ENCODE measurements at regions of chr17 and their contacts with region 1.

Region 1: DNA sequence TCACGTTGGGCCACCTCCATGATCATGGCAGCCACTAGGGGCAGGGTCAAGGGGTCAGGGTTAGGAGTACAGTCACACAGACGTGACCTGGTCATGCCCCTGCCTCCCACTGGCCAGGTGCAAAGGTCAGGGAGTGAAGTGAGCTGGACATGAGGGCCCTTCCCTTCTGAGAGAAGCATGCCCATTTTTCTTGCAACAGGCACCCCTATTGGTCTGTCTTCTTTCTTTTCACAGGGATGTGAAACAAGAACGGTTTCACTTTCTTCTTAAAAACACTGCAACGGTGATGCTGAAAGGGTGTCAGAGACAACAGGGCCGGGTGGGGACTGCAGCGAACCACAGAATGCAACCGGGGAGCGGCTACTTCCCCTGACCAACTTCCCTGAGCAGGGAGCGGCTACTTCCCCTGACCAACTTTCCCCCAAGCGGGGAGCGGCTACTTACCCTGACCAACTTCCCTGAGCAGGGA is 52.1 kb upstream of the DOC2B start:
- DNase-seq: peak; percentile 47
- ATAC-seq: peak in 1 of 2 donors; percentile 24

Region 2: DNA sequence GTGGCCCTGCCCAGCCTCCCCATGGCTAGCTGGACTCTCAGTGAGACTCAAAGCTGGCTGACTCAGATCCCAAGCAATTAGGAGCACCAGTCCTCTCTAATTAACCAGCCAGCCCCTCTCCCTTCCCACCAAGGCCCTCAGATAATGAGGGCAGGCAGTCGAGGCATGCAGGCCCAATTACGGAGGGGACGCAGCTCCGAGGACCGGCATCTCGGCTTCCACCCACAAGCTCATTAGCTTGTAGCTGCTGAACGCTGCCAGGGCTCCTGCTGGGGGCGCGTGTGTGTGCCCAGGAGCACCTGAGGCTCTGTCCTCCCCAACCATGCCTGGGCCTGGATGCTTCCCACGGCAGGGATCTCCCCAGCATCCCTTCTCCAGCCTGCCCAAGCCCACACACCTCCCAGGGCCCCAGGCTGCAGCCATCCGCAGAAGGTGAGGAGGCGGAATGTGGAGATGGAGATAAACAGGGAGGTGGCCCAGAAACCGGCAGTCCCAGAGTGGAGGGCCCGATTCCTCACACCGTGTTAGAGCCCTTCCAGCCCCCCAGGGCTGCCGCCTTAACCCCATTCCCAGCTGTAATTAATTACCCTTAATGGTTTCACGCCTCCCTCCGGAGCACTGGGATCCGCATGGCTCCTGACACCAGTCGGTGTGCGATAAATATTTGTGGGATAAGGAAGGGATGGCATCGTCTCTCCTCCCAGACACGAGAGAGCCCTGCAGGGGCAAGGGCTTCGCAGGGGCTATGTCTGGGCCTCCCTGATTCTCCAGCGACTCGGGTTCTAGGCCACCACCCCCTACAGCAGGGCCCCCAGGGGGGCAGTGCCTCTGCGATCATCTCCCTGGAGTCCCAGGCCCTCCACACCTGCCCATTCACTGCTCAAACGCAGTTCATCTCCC is 76.9 kb after region 1 on chr17:
- intact Hi-C with region 1: loop called in 1 of 2 experiments (anchors 5 kb)
- DNase-seq: no peak
- ATAC-seq: no peak

Region 3: DNA sequence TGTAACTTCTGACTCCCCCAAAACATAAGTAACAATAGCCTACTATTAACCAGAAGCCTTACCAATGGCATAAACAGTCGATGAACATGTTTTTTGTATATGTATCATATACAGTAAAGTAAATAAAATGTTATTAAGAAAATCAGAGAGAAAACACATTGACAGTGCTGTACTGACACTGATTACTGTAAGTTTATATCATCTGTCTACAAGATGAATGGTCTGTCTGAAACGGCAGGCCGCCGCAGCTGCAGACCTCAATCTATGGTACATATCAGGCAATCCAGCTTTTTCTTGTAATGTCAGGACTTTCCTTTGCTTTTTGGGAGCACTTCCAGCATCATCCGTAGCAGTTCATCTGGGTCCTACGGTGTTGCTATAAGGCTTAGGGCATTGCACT is 163.3 kb after region 1 on chr17:
- intact Hi-C with region 1: no loop called
- DNase-seq: no peak
- ATAC-seq: no peak